AG04450 (cell line): ENCODE measurements at regions of chr12 and their contacts with region 1.

Region 1: GRCh38 chr12:9975614-9976013 is 4.4 kb downstream of the CLEC12A start:
- DNase-seq: no peak
- H3K4me3 ChIP-seq: no peak overlapping the region
- H3K27ac ChIP-seq: no peak overlapping the region
- H3K27me3 ChIP-seq: no peaks in the 10 kb centered on the region
- CTCF ChIP-seq: no peak

Region 2: GRCh38 chr12:9961901-9962300 is 13.7 kb before region 1 on chr12:
- CTCF ChIA-PET with region 1: no interaction called
- POLR2A ChIA-PET with region 1: interaction called, 10 read pairs
- DNase-seq: no peak
- H3K4me3 ChIP-seq: no peak overlapping the region
- H3K27ac ChIP-seq: no peak overlapping the region
- H3K27me3 ChIP-seq: peaks cover 2% of the 10 kb centered on the region
- CTCF ChIP-seq: no peak

Region 3: GRCh38 chr12:9992296-9992695 is 16.7 kb after region 1 on chr12:
- CTCF ChIA-PET with region 1: no interaction called
- POLR2A ChIA-PET with region 1: no interaction called
- DNase-seq: no peak
- H3K4me3 ChIP-seq: no peak overlapping the region
- H3K27ac ChIP-seq: no peak overlapping the region
- H3K27me3 ChIP-seq: no peaks in the 10 kb centered on the region
- CTCF ChIP-seq: no peak